GM13976 (cell line): ENCODE measurements at regions of chr2 and their contacts with region 1.

Region 1: GRCh38 chr2:112597537-112598322 is 13.3 kb downstream of the CHCHD5 start:
- DNase-seq: no peak
- CTCF ChIP-seq: no peak

Region 2: DNA sequence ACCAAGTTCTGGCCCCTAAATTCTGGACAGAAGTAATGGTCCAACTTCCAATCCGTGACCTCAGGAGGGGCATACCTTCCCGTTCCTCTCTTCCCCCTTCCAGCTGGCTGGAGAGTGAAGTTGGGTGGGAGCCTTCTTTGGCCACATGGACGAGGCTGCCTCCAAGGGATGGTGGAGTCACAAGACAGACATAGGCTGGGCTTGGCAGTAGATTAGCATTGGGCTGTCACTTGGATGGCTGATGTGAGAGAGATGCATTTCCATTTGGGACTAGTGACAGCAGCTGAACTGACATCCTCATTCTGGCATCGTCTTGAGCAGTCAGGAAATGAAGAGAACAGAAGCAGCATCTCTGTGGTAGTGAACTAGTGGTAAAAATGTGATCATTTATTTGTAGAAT is 135.7 kb after region 1 on chr2:
- in situ Hi-C with region 1: loop called (anchors 10 kb)
- DNase-seq: no peak
- CTCF ChIP-seq: no peak